AG04450 (cell line): ENCODE measurements at regions of chr6 and their contacts with region 1.

Region 1: GRCh38 chr6:116287689-116288282 is 8.1 kb upstream of the TSPYL1 start:
- DNase-seq: no peak
- H3K4me3 ChIP-seq: no peak overlapping the region
- H3K27ac ChIP-seq: no peak overlapping the region
- H3K27me3 ChIP-seq: no peaks in the 10 kb centered on the region
- CTCF ChIP-seq: peak; percentile 84

Region 2: DNA sequence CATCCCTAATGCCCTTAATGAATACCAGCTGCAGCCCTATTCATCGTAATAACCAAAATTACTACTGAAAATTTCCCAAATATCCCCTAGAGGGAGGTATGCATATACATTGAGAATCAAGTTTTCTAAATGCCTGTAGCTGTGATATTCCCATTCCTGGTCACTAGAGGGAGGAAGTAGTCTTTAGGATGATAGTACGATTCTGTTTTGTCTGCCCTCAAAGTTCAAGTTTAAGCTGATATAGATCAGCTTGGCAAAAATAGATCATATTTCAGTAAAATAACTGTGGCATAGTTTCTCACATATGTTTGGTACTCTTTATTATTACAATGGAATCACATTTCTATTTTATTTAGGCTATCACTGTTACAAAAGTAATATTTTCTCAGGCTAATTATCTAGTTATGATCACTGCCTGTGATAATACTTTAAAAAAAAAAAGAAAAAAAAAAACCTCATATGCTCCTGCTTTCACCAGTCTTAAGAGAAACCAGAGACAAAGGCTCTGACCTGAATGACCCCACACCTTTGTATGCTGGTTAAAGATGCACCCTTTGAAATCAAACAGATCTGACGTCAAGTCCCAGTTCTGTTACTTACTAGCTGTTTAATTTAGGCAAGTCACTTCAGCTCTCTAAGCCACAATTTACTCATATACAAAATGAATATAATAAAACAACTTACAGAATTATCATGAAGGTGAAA is 19.0 kb before region 1 on chr6:
- CTCF ChIA-PET with region 1: interaction called, 39 read pairs
- POLR2A ChIA-PET with region 1: no interaction called
- DNase-seq: peak; percentile 65
- H3K4me3 ChIP-seq: no peak overlapping the region
- H3K27ac ChIP-seq: no peak overlapping the region
- H3K27me3 ChIP-seq: no peaks in the 10 kb centered on the region
- CTCF ChIP-seq: peak; percentile 96

Region 3: DNA sequence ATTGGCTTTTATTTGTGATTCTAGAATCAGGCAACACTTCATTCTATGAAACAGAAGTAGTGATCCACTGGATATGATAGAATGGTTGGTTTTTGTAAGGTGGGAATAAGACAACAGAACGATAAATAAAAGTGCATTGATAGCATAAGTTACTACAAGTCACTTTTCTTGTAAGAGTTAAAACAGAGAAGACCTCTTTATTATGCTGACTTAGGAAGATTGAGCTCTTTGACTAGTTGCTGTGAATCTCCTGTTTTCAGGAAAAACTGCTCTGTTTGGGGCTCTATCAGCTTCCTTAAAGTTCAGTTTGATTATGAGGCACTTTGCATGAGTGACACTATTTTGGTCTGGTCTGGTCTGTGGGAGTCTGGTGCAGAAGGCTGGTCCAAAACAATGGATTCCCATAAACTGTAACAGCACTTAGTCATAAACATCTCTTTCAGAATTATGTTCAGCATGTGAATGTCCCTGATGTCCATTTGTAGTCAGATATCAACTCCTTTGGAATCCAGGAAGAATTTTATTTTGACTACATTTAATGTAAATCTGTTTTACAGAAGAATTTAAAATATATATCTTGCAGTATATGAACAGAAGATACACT is 47.9 kb after region 1 on chr6:
- CTCF ChIA-PET with region 1: interaction called, 11 read pairs
- POLR2A ChIA-PET with region 1: no interaction called
- DNase-seq: no peak
- H3K4me3 ChIP-seq: no peak overlapping the region
- H3K27ac ChIP-seq: no peak overlapping the region
- H3K27me3 ChIP-seq: no peaks in the 10 kb centered on the region
- CTCF ChIP-seq: no peak

Region 4: DNA sequence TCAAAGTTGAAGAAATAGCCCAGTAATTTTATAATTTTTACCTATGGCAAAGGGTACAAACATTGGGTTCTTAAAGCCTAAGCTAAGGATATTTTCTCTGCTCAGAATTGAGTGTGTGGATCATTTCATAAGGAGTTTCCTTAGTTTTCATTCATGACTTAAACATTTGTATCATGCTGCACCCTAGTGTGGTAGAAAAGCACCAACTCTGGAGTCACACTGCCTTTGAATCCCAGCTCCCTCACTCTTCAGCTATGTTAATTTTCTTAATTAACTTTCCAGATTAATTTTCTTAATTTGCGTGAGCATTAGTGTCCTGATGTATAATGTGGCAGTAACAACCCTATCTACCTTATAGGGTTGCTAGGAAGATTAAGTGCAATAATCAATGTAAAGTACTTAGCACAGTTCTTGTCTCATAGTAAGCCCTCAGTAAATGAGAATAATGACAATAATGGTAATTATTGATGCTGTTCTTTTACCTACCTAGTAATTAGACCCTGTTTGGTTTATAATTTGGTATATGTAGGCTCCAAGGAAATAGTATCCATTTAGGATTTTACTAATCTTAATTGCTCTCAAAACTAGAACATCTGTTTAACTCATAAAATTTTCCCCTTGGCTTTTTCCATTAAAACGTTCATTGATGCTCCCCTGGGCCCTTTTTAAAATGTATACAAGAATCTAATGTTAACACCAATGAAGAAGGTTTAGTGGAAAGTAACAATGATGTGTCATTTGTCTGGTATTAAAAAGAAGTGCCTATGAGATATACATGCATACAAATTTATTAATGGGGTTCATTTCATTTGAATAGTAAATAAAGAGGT is 114.5 kb after region 1 on chr6:
- CTCF ChIA-PET with region 1: interaction called, 12 read pairs
- POLR2A ChIA-PET with region 1: no interaction called
- DNase-seq: no peak
- H3K4me3 ChIP-seq: no peak overlapping the region
- H3K27ac ChIP-seq: no peak overlapping the region
- H3K27me3 ChIP-seq: no peaks in the 10 kb centered on the region
- CTCF ChIP-seq: no peak

Region 5: DNA sequence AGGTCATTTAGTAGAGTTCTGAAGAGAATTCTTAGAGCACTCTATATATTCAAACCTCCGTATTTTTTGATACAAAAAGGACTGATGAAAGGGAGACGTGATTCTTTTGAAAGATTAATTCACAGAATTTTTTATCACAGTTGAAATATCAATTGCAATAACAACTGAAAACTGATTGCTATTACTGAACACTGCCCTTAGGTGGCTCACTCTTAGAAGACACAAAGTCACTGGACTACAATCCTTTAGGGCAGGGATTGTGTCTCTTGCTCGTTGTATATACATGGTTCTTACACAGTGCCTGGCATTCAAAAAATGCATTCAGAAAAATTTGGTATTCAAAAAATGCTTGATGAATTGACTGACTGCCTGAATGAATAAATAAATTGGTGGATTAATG is 156.3 kb after region 1 on chr6:
- CTCF ChIA-PET with region 1: interaction called, 25 read pairs
- POLR2A ChIA-PET with region 1: no interaction called
- DNase-seq: no peak
- H3K4me3 ChIP-seq: no peak overlapping the region
- H3K27ac ChIP-seq: no peak overlapping the region
- H3K27me3 ChIP-seq: no peaks in the 10 kb centered on the region
- CTCF ChIP-seq: peak; percentile 57

Region 6: DNA sequence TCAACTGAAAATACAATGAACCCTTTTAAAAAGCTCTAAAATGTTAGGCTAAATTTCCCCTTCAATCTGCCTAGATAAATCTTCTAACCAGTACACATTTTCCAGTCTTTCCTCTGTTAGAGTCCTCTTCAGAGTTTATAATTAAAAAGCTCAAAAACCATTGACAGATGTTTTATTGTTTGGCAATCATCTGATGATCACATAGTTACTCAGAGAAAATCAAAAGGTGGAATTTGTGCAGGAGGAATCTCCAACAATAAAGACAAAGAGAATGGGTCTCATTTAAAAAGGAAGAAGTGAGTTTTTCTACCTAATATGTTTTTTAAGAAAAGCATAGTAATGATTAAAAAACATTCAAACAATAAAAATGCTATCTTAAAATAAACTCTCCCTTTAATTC is 254.6 kb after region 1 on chr6:
- CTCF ChIA-PET with region 1: interaction called, 24 read pairs
- POLR2A ChIA-PET with region 1: no interaction called
- DNase-seq: no peak
- H3K4me3 ChIP-seq: no peak overlapping the region
- H3K27ac ChIP-seq: no peak overlapping the region
- H3K27me3 ChIP-seq: no peaks in the 10 kb centered on the region
- CTCF ChIP-seq: no peak

Region 7: DNA sequence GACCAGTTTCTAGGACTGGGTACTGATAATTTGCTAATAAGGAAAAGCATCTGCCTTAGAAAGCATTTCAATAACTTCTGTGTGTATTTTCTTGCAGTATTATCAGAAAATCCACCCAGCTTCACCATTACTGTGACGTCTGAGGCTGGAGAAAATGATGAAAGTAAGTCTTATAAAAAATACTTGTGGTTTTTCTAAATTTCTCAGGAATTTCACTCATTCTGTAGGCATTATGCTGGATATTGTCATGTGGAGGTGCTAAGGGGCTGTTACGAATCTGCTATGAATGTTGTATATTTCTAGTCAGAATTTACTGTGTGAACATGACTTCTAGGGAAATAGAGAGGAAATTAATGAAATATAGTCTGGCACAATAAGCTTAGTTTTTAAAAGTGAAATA is 292.4 kb after region 1 on chr6:
- CTCF ChIA-PET with region 1: interaction called, 10 read pairs
- POLR2A ChIA-PET with region 1: no interaction called
- DNase-seq: no peak
- H3K4me3 ChIP-seq: no peak overlapping the region
- H3K27ac ChIP-seq: no peak overlapping the region
- H3K27me3 ChIP-seq: no peaks in the 10 kb centered on the region
- CTCF ChIP-seq: no peak